A673 (cell line): ENCODE measurements at regions of chr1 and their contacts with region 1.

Region 1: DNA sequence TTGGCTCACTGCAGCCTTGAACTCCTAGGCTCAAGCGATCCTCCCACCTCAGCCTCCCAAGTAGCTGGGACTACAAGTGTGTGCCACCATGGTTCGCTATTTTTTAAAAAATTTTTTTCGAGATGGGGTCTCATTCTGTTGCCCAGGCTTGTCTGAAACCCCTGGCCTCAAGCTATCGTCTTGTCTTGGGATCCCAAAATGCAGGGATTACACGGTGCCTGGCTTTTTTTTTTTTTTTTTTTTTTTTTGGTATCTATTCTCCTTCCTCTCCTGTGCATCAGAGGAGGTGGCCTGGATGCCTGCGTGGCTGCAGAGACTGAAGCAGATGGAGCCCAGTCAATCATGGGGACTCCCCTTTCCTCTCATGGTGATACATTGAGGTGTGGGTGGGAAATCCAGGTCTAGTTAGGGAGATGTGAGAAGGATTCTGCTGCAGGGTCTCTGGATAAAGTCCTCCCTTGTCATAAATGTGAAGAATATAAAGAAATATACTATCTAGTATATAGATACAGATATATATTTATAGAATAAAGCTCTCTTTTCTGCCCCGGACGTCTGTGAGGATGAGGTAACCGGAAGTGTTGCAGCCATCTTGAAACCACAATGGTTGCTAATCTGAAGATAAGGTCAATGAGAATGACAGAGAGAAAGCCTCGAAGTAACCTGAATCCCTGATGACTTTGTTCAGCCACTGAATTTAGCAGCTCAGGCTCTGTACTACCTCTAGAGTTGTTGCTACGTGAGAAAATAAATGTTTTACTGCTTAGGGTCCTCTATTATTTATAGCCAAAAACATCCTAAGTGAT is 19.5 kb upstream of the RGSL1 start:
- DNase-seq: no peak
- H3K4me3 ChIP-seq: no peak overlapping the region
- H3K27ac ChIP-seq: no peak overlapping the region
- H3K4me1 ChIP-seq: no peaks in the 10 kb centered on the region
- H3K27me3 ChIP-seq: no peaks in the 10 kb centered on the region
- CTCF ChIP-seq: no peak

Region 2: DNA sequence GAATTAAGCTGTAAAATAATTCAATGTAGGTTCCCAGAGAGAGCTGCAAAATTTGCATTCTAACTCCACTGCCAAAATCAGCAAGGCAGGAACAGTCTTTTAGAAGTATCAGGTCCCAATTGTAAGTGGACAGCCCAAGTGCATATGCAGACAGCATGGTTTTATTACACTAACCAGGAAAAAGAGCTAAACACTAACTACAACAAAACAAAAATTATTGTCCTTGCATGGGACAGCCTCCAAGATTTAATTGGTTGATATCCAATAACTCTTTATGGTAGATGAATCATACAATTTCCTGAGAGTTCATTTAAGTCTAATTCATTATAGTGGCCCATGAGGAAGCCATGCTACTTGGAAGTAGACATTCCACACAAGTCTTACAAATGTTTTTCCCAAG is 214.7 kb before region 1 on chr1:
- CTCF ChIA-PET with region 1: no interaction called
- POLR2A ChIA-PET with region 1: no interaction called
- intact Hi-C with region 1: no loop called
- DNase-seq: peak; percentile 14
- H3K4me3 ChIP-seq: no peak overlapping the region
- H3K27ac ChIP-seq: no peak overlapping the region
- H3K4me1 ChIP-seq: no peaks in the 10 kb centered on the region
- H3K27me3 ChIP-seq: no peaks in the 10 kb centered on the region
- CTCF ChIP-seq: no peak

Region 3: DNA sequence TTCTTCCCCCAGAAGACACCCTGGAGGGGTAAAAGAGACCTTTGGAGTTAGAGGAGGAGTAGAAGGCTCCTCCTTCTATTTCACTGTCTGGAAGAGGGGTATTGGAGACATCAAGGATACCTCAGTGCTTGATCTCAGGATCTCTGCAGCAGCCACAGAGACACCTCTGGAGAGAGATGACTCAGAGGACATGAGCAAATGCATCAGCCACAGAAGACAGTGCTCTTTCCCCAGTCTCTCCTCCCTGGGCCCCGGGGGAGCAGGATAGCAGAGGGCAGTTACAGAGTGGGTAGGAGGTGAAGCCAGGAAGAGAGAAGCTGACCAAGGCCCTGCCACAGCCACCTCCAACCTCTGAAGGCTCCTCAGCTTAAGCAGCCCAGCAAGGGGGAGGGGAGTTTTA is 14.7 kb before region 1 on chr1:
- CTCF ChIA-PET with region 1: no interaction called
- POLR2A ChIA-PET with region 1: no interaction called
- intact Hi-C with region 1: no loop called
- DNase-seq: no peak
- H3K4me3 ChIP-seq: no peak overlapping the region
- H3K27ac ChIP-seq: no peak overlapping the region
- H3K4me1 ChIP-seq: no peaks in the 10 kb centered on the region
- H3K27me3 ChIP-seq: peaks cover 19% of the 10 kb centered on the region
- CTCF ChIP-seq: no peak

Region 4: GRCh38 chr1:184160236-184160635 is 1729.8 kb after region 1 on chr1:
- CTCF ChIA-PET with region 1: no interaction called
- POLR2A ChIA-PET with region 1: interaction called, 15 read pairs
- intact Hi-C with region 1: no loop called
- DNase-seq: peak; percentile 19
- H3K4me3 ChIP-seq: no peak overlapping the region
- H3K27ac ChIP-seq: no peak overlapping the region
- H3K4me1 ChIP-seq: peaks cover 48% of the 10 kb centered on the region
- H3K27me3 ChIP-seq: no peaks in the 10 kb centered on the region
- CTCF ChIP-seq: no peak